ENCODE measurements at regions of chr15 and their contacts with region 1.

Region 1: GRCh38 chr15:79896637-79897379 is at the start of gene MTHFS:
- DNase-seq: peak; percentile 76
- ATAC-seq: peak; percentile 87
- H3K4me3 Mint-ChIP-seq: peak within 1 kb of the TSS; percentile 99
- H3K27ac Mint-ChIP-seq: peak within 1 kb of the TSS; percentile 100
- H3K4me1 Mint-ChIP-seq: peaks cover 54% of the 10 kb centered on the region
- H3K27me3 Mint-ChIP-seq: no peaks in the 10 kb centered on the region
- CTCF ChIP-seq: no peak
- total RNA-seq, gene MTHFS: 28.6 and 29.5 TPM in 2 replicates

Region 2: GRCh38 chr15:79970624-79971434 is 74.0 kb after region 1 on chr15 and contains the start of gene BCL2A1:
- CTCF ChIA-PET with region 1: no interaction called
- POLR2A ChIA-PET with region 1: interaction called, 18 read pairs
- intact Hi-C with region 1: loop called (anchors 1 kb)
- DNase-seq: peak; percentile 33
- ATAC-seq: peak; percentile 83
- H3K4me3 Mint-ChIP-seq: peak within 1 kb of the TSS; percentile 89
- H3K27ac Mint-ChIP-seq: peak within 1 kb of the TSS; percentile 93
- H3K4me1 Mint-ChIP-seq: peaks cover 61% of the 10 kb centered on the region
- H3K27me3 Mint-ChIP-seq: no peaks in the 10 kb centered on the region
- CTCF ChIP-seq: no peak
- total RNA-seq, gene BCL2A1: 181 and 189 TPM in 2 replicates

Region 3: DNA sequence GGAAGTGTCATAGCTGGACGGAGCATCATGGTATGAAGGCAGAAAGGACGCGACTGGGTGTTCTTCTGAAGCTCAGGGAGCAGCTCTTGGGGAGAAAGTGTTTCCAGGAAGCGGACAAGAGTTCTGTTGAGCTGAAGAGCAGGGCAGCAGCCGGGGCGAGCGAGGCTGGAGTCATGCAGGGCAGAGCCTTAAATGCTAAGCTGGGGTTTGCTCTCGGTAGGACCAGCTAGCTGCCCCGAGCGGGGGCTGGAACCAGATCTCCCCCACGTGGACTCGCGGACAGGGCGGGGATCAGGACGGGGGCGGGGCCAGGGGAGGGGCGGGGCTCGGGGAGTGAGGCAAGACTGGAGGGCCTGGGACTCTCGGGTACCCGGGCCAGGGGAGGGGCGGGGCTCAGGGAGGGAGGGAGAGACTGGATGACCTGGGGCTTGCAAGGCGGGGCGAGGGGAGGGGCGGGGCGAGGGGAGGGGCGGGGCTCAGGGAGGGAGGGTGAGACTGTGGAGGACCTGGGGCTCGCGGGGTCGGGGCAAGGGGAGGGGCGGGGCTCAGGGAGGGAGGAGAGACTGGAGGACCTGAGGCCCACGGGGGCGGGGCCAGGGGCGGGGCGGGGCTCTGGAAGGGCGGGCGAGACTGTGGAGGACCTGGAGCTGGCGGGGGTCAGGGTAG is 255.5 kb after region 1 on chr15:
- CTCF ChIA-PET with region 1: no interaction called
- POLR2A ChIA-PET with region 1: no interaction called
- intact Hi-C with region 1: loop called (anchors 1 kb)
- DNase-seq: peak; percentile 66
- ATAC-seq: peak; percentile 87
- H3K4me3 Mint-ChIP-seq: peak overlapping the region; percentile 86
- H3K27ac Mint-ChIP-seq: peak overlapping the region; percentile 68
- H3K4me1 Mint-ChIP-seq: peaks cover 15% of the 10 kb centered on the region
- H3K27me3 Mint-ChIP-seq: no peaks in the 10 kb centered on the region
- CTCF ChIP-seq: no peak

Region 4: GRCh38 chr15:80173022-80173759 is 276.4 kb after region 1 on chr15:
- CTCF ChIA-PET with region 1: no interaction called
- POLR2A ChIA-PET with region 1: no interaction called
- intact Hi-C with region 1: loop called (anchors 1 kb)
- DNase-seq: peak; percentile 59
- ATAC-seq: peak; percentile 85
- H3K4me3 Mint-ChIP-seq: no peak overlapping the region
- H3K27ac Mint-ChIP-seq: peak overlapping the region; percentile 35
- H3K4me1 Mint-ChIP-seq: no peaks in the 10 kb centered on the region
- H3K27me3 Mint-ChIP-seq: no peaks in the 10 kb centered on the region
- CTCF ChIP-seq: no peak

Measured in activated B cell treated with CpG ODN at 0.5 μM for 24 hours (primary cell).